ENCODE measurements at regions of chr18 and their contacts with region 1.

Region 1: DNA sequence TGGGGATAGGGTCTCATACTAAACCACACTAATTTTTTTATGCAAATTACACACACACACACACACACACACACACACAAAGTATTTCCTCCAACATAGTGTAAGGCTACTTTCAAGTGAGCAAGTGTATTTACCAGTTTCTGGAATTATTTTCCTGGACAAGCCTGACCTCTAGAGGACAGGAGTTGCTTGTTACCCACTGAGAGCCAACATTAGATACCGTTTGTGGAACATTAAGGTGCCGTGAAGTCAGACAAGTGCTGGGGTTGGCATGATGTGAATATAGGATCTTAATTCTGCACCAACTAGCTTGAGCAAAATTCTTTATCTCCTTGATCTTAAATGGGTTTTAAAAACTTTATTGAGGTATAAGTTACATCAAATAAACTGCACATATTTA is 39.3 kb upstream of the SERPINB2 start:
- DNase-seq: no peak
- H3K4me3 ChIP-seq: no peak overlapping the region
- H3K27me3 ChIP-seq: no peaks in the 10 kb centered on the region
- CTCF ChIP-seq: peak; percentile 73

Region 2: DNA sequence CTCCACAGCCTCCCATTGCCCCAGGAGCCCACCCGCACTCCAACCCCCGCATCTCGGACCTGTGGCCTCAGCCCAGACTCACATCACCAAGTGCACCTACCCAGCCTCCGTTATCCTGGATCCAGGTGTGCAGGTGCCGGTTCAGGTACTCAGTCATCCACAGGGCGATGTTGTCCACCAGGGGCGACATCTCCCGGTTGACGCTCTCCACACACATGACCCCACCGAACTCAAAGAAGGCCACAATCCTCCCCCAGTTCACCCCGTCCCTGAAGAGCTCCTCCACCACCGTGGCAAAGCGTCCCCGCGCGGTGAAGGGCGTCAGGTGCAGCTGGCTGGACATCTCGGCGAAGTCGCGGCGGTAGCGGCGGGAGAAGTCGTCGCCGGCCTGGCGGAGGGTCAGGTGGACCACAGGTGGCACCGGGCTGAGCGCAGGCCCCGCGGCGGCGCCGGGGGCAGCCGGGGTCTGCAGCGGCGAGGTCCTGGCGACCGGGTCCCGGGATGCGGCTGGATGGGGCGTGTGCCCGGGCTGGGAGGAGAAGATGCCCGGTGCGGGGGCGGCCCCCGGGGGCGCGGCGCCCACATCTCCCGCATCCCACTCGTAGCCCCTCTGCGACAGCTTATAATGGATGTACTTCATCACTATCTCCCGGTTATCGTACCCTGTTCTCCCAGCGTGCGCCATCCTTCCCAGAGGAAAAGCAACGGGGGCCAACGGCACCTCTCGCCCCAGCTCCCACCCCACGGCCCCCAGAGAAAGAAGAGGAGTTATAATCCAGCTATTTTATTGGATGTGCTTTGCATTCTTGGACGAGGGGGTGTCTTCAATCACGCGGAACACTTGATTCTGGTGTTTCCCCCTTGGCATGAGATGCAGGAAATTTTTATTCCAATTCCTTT is 529.9 kb before region 1 on chr18:
- CTCF ChIA-PET with region 1: no interaction called
- POLR2A ChIA-PET with region 1: no interaction called
- DNase-seq: no peak
- H3K4me3 ChIP-seq: no peak overlapping the region
- H3K27me3 ChIP-seq: peaks cover 12% of the 10 kb centered on the region
- CTCF ChIP-seq: peak; percentile 46

Region 3: DNA sequence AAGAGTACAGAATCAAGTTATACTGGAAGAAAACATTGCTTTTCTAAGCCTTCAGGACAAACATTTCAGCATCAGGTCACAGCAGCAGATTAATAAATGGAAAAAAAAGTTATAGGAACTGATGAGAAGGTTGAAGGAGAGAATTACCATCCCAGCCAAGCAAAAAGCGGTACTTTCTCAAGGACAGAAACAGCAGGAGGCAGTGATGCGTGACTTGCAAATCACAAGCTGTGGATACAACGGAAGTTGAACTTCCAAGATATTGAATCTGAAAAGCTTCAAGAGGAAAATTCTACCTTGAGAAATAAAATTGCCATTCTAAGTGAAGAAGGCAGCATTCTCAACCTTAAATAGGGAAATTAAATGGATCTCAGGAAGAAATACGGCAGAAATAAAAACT is 324.5 kb before region 1 on chr18:
- CTCF ChIA-PET with region 1: interaction called, 99 read pairs
- POLR2A ChIA-PET with region 1: no interaction called
- DNase-seq: no peak
- H3K4me3 ChIP-seq: no peak overlapping the region
- H3K27me3 ChIP-seq: no peaks in the 10 kb centered on the region
- CTCF ChIP-seq: no peak

Region 4: GRCh38 chr18:64259871-64260270 is 411.7 kb after region 1 on chr18:
- CTCF ChIA-PET with region 1: no interaction called
- POLR2A ChIA-PET with region 1: no interaction called
- DNase-seq: no peak
- H3K4me3 ChIP-seq: no peak overlapping the region
- H3K27me3 ChIP-seq: no peaks in the 10 kb centered on the region
- CTCF ChIP-seq: no peak

Measured in BJ (cell line).